ENCODE measurements at regions of chr6 and their contacts with region 1.

Region 1: GRCh38 chr6:44381739-44382138 is 5.8 kb upstream of the CDC5L start:
- DNase-seq: no peak
- H3K4me3 ChIP-seq: no peak overlapping the region
- H3K27ac ChIP-seq: no peak overlapping the region
- H3K4me1 ChIP-seq: peaks cover 0 to 5% of the 10 kb centered on the region in 2 donors
- H3K27me3 ChIP-seq: no peaks in the 10 kb centered on the region
- CTCF ChIP-seq: no peak
- POLR2A ChIP-seq: no peak

Region 2: GRCh38 chr6:43972913-43973300 is 408.8 kb before region 1 on chr6:
- intact Hi-C with region 1: no loop called
- DNase-seq: peak; percentile 79 to 86
- H3K4me3 ChIP-seq: no peak overlapping the region
- H3K27ac ChIP-seq: peak overlapping the region; percentile 31 to 74 (median 68)
- H3K4me1 ChIP-seq: peaks cover 38 to 47% of the 10 kb centered on the region in 2 donors
- H3K27me3 ChIP-seq: no peaks in the 10 kb centered on the region
- CTCF ChIP-seq: no peak
- POLR2A ChIP-seq: no peak

Region 3: GRCh38 chr6:44265007-44265721 is 116.6 kb before region 1 on chr6 and contains the start of gene NFKBIE:
- intact Hi-C with region 1: loop called (anchors 5 kb)
- DNase-seq: peak; percentile 98 to 99
- H3K4me3 ChIP-seq: peak within 1 kb of the TSS; percentile 77 to 83 (median 82)
- H3K27ac ChIP-seq: peak within 1 kb of the TSS; percentile 60 to 90 (median 81)
- H3K4me1 ChIP-seq: peaks cover 27 to 30% of the 10 kb centered on the region in 2 donors
- H3K27me3 ChIP-seq: no peaks in the 10 kb centered on the region
- CTCF ChIP-seq: peak in 3 of 6 experiments; percentile 20 to 25 (median 21)
- POLR2A ChIP-seq: peak; percentile 76 to 91
- total RNA-seq, gene NFKBIE: 5.1 to 16.9 (median 13.2) TPM

Measured in thyroid gland (tissue), 4 donors.